MCF 10A (cell line): ENCODE measurements at regions of chr5 and their contacts with region 1.

Region 1: DNA sequence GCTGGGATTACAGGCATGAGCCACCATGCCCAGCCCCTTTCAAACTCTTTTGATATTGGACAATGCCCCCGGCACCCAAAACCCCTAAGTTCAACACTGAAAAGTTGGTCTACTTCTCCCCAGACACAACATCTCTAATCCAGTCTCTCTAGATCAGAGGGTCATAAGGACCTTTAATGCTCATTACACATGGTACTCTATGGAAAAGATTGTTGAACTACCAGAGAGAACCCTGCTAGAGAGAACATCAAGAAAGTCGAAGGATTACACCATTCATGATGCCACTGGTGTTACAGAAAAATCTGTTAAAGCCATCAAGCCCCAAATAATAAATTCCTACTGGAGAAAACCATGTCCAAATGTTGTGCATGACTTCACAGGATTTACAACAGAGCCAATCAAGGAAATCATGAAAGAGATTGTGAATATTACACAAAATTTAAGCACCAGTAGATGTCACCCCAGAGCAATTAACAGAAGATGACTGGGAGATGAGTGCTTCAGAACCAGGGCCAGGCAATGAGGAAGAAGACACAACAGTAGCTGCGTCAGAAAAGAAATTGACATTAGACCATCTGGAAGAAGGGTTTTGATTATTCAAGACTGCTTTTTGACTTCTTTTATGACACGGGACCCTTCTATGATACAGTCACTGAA is 28.3 kb upstream of the NIPAL4 start:
- DNase-seq: peak; percentile 82
- H3K4me3 Mint-ChIP-seq: no peak overlapping the region
- H3K27ac Mint-ChIP-seq: no peak overlapping the region
- H3K4me1 Mint-ChIP-seq: no peaks in the 10 kb centered on the region
- H3K27me3 Mint-ChIP-seq: no peaks in the 10 kb centered on the region
- CTCF ChIP-seq: peak; percentile 69

Region 2: DNA sequence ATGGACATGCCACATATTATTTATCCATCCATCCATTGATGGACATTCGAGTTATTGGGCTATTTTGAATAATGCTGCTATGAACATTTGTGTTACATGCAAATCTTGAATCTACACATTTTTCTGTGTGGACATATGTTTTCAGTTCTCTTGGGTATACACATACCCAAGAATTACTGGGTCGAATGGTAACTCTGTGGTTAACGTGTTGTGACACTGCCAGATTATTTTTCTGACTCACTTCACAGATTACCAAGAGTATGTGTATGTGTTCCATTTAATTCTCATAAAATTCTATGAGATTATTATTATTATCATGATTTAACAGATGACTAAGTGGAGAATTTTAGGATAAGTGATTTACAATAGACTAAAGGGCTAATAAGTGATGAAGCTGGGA is 139.1 kb before region 1 on chr5:
- CTCF ChIA-PET with region 1: no interaction called
- POLR2A ChIA-PET with region 1: no interaction called
- intact Hi-C with region 1: no loop called
- DNase-seq: no peak
- H3K4me3 Mint-ChIP-seq: no peak overlapping the region
- H3K27ac Mint-ChIP-seq: no peak overlapping the region
- H3K4me1 Mint-ChIP-seq: peaks cover 15% of the 10 kb centered on the region
- H3K27me3 Mint-ChIP-seq: no peaks in the 10 kb centered on the region
- CTCF ChIP-seq: no peak

Region 3: DNA sequence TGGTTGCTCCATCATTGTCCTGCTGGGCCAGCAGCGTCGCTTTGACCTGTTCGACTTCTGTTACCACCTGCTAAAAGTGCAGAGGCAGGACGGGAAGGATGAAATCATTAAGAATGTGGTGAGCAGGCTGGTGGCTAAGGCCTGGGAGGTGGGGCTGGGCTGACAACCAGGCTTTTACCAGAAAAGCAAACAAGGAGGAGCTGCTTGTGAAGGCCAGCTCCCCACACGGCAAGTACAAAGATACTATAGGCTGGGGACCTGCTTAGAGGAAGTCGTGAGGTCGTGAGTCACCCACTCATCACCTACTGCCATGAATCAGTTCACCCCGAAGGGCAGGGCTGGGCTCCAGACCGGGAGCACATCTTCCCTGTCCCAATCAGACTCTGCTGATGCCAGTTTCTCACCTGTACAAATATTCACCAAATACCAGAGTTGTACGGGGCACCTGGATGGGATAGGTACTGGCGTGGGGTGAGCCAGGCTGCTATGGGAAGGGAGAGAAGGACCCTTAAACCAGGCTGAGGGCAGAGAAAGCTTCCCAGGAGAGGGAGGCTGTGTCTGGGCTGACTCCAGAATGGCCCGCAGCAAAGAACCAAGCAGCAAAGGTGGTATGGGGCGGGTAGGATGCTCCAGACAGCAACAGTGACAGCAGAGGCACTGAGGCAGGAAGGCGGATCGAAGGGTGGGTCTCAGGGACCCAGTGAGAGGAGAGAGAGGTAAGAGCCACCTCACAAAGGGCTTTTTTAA is 40.9 kb before region 1 on chr5:
- CTCF ChIA-PET with region 1: interaction called, 16 read pairs
- POLR2A ChIA-PET with region 1: no interaction called
- intact Hi-C with region 1: no loop called
- DNase-seq: peak; percentile 98
- H3K4me3 Mint-ChIP-seq: no peak overlapping the region
- H3K27ac Mint-ChIP-seq: peak overlapping the region; percentile 76
- H3K4me1 Mint-ChIP-seq: peaks cover 23% of the 10 kb centered on the region
- H3K27me3 Mint-ChIP-seq: no peaks in the 10 kb centered on the region
- CTCF ChIP-seq: no peak

Region 4: DNA sequence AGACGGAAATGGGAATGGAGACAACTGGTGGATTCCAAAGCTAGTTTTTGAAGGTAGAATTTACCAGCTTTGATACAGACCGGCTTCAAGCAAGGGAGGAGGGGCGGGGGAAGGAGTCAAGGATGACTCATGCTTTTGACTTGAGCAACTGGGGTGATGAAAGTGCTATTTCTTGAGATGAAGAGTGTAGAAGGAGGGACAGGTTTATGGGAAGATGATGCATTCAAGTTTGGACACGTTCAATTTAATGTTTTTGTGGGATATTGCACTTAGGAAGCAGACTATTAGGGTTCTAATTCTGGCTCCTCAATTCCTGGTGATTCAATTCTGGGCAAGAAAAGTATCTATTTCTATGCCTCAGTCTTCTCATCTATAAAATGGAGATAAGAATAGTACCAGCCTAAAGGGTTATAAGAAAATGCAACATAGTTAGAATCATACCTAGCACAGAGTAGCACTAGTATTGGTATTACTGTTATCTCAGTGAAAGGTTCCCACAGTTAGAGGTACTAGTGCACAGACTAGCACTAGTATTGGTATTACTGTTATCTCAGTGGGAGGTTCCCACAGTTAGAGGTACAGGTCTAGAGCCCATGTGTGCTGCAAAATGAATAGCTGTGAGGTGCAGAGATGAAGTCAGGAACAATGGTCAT is 33.0 kb after region 1 on chr5:
- CTCF ChIA-PET with region 1: interaction called, 642 read pairs
- POLR2A ChIA-PET with region 1: interaction called, 14 read pairs
- intact Hi-C with region 1: no loop called
- DNase-seq: peak; percentile 99
- H3K4me3 Mint-ChIP-seq: peak overlapping the region; percentile 11
- H3K27ac Mint-ChIP-seq: peak overlapping the region; percentile 69
- H3K4me1 Mint-ChIP-seq: peaks cover 38% of the 10 kb centered on the region
- H3K27me3 Mint-ChIP-seq: no peaks in the 10 kb centered on the region
- CTCF ChIP-seq: no peak

Region 5: DNA sequence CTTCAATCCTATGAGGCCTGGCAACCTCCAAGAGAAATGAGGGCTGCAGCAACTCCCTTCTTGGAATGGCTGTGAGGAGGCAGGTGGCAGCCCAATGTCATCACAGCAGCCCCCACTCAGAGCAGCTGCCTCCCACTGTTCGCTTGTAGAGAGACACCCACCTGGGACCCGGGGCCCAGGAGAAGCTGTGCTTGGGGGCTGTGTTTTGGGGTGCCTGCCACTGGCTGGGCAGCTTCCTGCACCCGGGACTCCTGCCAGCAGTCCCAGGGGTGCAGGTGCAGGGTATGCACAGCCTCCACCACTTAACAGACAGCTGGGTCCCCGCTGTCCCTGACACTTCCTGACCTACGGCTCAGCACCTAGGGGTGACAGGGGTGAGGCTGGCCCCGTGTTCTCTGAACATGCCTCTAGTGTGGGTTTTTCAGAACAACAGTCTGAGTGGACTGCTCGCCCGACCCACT is 54.6 kb after region 1 on chr5:
- CTCF ChIA-PET with region 1: interaction called, 642 read pairs
- POLR2A ChIA-PET with region 1: no interaction called
- intact Hi-C with region 1: no loop called
- DNase-seq: no peak
- H3K4me3 Mint-ChIP-seq: no peak overlapping the region
- H3K27ac Mint-ChIP-seq: no peak overlapping the region
- H3K4me1 Mint-ChIP-seq: peaks cover 5% of the 10 kb centered on the region
- H3K27me3 Mint-ChIP-seq: no peaks in the 10 kb centered on the region
- CTCF ChIP-seq: no peak